Posterior vena cava (tissue), 2 donors: ENCODE measurements at regions of chr18 and their contacts with region 1.

Region 1: DNA sequence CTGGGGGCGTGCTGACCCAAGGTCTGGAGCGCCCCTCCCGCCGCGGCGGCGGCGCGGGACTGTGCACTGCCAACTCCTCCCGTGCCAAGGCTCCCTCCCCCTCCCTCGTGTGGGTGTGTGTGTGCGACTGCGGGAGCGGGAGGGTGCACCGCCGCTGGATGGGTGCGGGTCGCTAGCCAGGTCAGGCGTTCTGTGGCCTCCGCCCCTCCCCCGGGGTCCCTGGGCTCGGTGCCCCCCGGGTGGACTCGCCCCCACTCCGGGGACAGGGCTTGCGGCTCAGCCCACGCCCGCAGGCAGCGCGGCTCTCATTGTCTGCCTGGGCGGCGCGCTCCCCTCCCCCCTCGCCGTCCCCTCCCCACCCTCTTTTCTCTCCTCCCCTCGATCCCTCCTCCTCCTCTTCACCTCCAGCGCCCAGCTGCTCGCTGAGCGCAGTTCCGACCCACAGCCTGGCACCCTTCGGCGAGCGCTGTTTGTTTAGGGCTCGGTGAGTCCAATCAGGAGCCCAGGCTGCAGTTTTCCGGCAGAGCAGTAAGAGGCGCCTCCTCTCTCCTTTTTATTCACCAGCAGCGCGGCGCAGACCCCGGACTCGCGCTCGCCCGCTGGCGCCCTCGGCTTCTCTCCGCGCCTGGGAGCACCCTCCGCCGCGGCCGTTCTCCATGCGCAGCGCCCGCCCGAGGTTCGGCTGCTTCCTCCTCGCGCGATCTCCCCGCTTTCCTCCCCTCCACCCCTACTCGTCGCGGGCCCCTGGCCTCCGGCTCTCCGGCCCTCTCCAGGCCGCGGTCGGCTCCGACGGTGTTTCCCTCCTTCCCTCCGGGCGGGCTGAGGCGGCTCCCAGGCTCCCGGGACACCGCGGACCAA is at the start of gene GATA6:
- DNase-seq: peak; percentile 97
- total RNA-seq, gene GATA6: 32.7 to 38.4 TPM

Region 2: GRCh38 chr18:21894619-21895367 is 274.4 kb before region 1 on chr18:
- intact Hi-C with region 1: no loop called
- DNase-seq: no peak

Region 3: GRCh38 chr18:21904856-21905255 is 264.4 kb before region 1 on chr18:
- intact Hi-C with region 1: loop called (anchors 10 kb)
- DNase-seq: peak; percentile 82

Region 4: GRCh38 chr18:21914739-21915319 is 254.4 kb before region 1 on chr18:
- intact Hi-C with region 1: loop called in 1 of 2 experiments (anchors 10 kb)
- DNase-seq: no peak

Region 5: DNA sequence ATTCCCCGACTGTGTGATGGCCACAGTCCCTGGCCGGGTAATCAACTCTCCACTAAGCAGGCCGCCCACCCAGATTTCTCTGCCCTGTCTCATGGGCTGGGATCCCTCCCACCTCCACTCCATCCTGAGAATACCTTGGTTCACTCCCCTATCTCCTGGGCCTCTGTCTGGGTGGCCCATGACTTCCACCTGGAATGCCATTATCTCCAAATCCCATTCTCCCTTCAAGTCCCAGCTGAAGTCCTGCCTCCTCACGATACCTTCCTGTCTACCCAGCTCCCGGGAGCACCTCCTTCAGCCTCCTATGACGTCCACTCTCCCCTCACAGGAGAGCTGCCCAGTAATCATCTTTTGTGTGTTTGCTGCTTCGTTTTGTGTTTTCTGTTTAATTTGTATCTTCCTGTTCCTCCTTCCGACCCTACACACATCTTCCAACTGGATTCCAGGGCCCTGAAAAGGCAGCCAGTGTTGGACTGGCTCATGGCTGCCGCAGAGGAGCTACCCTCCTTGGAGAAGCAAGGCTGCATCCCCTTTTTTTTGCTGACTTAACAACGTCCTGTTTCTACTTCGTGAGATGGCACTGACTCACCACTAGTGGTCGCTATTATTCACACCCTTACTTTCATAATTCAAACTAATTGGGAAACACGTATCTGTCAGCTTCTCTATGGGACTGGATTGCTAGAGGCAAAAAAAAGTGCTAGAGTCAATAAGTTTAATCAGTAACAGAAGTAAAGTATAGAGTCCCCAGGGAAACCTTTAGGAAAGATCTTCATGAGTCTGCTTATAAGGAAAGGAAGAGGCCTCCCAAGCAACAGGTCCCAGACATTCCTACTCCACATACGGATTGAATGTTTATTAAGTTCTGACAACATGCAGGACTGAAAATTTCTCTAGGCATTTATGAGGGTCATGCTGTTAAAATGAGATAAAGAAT is 171.8 kb before region 1 on chr18:
- intact Hi-C with region 1: loop called in 1 of 2 experiments (anchors 10 kb)
- DNase-seq: no peak

Region 6: DNA sequence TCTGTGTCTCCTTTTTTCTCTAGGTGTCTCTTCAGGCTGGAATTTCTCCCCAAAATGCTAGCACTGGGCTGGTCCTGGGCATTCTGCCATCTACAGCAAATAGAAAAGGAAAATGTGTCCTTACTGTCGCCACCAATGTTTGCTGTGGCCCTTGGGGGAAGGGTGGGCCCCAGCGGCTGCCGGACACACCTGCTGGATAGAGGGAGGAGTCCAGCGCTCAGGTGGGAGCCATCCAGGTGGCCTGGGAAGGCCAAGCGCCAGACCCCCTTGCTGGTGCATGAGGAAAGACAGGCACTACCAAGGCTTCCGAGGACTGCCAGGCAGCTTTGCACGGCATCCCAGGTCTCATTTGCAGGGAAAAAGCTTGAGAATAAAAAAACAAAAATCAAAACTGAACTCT is 147.5 kb before region 1 on chr18:
- intact Hi-C with region 1: no loop called
- DNase-seq: no peak

Region 7: GRCh38 chr18:22113144-22113830 is 55.9 kb before region 1 on chr18:
- intact Hi-C with region 1: no loop called
- DNase-seq: no peak

Region 8: GRCh38 chr18:22348521-22349316 is 179.5 kb after region 1 on chr18:
- intact Hi-C with region 1: loop called (anchors 5 kb)
- DNase-seq: peak; percentile 91

Region 9: DNA sequence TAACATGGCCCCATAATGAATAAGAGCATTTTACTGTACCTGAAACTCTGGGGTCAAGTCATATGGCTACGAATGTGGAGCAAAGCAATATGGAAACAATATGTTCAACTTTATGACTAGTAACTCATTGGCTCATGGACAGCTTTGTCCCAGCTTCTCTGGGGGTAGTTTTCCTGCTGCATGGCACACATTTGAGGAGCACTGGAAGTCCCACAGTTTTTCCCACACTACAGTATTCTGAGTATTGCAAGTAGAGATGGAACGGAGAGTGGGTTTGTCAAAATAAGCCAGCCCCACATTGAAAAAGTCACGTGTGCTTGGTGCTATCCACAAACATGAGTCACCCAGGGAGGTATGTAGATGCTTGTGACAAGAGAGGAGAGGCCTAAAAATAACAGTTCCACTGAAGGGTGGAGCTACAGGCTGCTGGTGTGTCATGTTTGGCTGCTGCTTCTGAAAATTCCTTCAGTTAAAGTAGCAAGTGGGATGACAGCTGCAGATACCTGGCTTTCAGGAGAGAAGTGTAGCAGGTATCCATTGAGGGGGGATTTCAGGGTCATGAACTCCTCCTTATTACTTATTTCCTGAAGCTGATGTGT is 296.7 kb after region 1 on chr18:
- intact Hi-C with region 1: loop called (anchors 5 kb)
- DNase-seq: no peak

Region 10: GRCh38 chr18:22563098-22563707 is 394.0 kb after region 1 on chr18:
- intact Hi-C with region 1: loop called (anchors 5 to 10 kb)
- DNase-seq: no peak

Region 11: GRCh38 chr18:23861805-23862470 is 1692.7 kb after region 1 on chr18:
- intact Hi-C with region 1: no loop called
- DNase-seq: no peak